Mammary epithelial cell (primary cell): ENCODE measurements at regions of chr12 and their contacts with region 1.

Region 1: DNA sequence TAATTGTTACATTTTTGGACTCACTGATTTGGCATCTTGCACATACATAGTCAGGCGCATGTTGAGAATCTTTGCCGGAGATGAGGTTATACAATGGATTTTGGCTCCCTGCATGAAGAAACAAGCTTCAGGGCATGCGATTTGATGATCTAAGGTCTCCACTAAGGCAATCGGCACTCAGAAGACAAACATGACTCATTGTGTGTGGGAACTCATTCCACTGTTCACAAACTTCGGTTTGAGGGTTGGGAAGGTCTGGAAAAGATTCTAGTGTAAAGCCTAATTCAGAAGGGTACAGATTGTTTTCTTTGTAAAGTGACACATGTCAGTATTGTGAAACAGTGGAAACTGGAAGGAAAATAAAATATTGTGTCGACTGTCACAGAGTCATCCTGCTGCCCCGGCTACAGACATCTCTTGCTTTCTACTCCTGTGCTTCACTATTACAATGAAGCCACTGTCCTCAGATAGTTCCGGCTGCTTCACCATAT is 192.6 kb upstream of the HMGA2 start:
- DNase-seq: peak; percentile 100
- H3K4me3 ChIP-seq: no peak overlapping the region
- H3K27ac ChIP-seq: peak overlapping the region; percentile 100
- H3K4me1 ChIP-seq: peaks cover 54% of the 10 kb centered on the region
- H3K27me3 ChIP-seq: no peaks in the 10 kb centered on the region
- CTCF ChIP-seq: no peak

Region 2: DNA sequence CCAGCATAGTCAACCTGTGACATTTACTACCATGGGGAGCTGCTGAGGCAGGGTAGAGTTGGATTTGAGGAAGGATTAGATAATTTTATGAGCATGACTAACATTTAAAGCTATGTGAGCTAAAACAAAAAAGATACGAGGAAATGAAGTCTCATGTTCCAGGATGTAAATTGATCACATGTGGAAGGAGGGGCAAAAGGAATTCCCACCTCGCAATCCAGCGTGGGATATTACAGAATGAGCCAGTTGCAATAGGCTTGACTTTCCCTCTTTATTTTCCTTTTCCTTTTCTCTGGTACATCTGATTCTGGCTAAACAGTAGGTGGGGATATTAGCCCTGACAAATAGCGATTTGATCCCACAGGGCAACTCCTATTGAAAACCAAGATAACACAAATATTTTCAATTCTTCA is 22.3 kb before region 1 on chr12:
- CTCF ChIA-PET with region 1: no interaction called
- dilution Hi-C with region 1: no loop called
- in situ Hi-C with region 1: no loop called
- intact Hi-C with region 1: loop called (anchors 1 kb)
- DNase-seq: peak; percentile 64
- H3K4me3 ChIP-seq: no peak overlapping the region
- H3K27ac ChIP-seq: peak overlapping the region; percentile 78
- H3K4me1 ChIP-seq: peaks cover 61% of the 10 kb centered on the region
- H3K27me3 ChIP-seq: no peaks in the 10 kb centered on the region
- CTCF ChIP-seq: no peak

Region 3: GRCh38 chr12:65643595-65644386 is 12.1 kb after region 1 on chr12:
- CTCF ChIA-PET with region 1: interaction called, 6 read pairs
- dilution Hi-C with region 1: no loop called
- in situ Hi-C with region 1: no loop called
- intact Hi-C with region 1: loop called (anchors 1 kb)
- DNase-seq: peak; percentile 93
- H3K4me3 ChIP-seq: no peak overlapping the region
- H3K27ac ChIP-seq: peak overlapping the region; percentile 96
- H3K4me1 ChIP-seq: peaks cover 25% of the 10 kb centered on the region
- H3K27me3 ChIP-seq: no peaks in the 10 kb centered on the region
- CTCF ChIP-seq: no peak

Region 4: DNA sequence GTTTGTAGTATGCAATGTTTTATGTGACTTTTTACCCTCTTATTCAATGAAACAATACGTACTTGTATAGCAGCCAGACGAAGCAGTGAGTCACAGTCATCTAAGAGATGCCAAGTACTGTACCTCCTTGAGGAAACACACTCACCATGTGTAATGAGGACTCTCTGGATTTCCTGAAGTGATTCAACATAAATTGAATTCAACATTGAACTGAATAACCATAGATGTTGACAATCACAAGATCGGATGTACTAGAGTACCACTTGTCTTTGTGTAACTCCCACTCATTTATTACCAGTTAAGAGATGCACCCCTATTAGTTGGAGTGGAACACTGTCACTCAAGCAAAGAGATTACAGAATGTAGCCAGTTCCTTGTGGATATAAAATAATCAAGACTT is 17.5 kb after region 1 on chr12:
- CTCF ChIA-PET with region 1: interaction called, 6 read pairs
- dilution Hi-C with region 1: no loop called
- in situ Hi-C with region 1: no loop called
- intact Hi-C with region 1: loop called (anchors 2 kb)
- DNase-seq: peak; percentile 99
- H3K4me3 ChIP-seq: no peak overlapping the region
- H3K27ac ChIP-seq: peak overlapping the region; percentile 93
- H3K4me1 ChIP-seq: peaks cover 31% of the 10 kb centered on the region
- H3K27me3 ChIP-seq: no peaks in the 10 kb centered on the region
- CTCF ChIP-seq: no peak

Region 5: GRCh38 chr12:65656904-65657351 is 25.3 kb after region 1 on chr12:
- CTCF ChIA-PET with region 1: interaction called, 9 read pairs
- dilution Hi-C with region 1: no loop called
- in situ Hi-C with region 1: no loop called
- intact Hi-C with region 1: loop called (anchors 1 kb)
- DNase-seq: peak; percentile 98
- H3K4me3 ChIP-seq: no peak overlapping the region
- H3K27ac ChIP-seq: peak overlapping the region; percentile 97
- H3K4me1 ChIP-seq: peaks cover 31% of the 10 kb centered on the region
- H3K27me3 ChIP-seq: no peaks in the 10 kb centered on the region
- CTCF ChIP-seq: no peak

Region 6: DNA sequence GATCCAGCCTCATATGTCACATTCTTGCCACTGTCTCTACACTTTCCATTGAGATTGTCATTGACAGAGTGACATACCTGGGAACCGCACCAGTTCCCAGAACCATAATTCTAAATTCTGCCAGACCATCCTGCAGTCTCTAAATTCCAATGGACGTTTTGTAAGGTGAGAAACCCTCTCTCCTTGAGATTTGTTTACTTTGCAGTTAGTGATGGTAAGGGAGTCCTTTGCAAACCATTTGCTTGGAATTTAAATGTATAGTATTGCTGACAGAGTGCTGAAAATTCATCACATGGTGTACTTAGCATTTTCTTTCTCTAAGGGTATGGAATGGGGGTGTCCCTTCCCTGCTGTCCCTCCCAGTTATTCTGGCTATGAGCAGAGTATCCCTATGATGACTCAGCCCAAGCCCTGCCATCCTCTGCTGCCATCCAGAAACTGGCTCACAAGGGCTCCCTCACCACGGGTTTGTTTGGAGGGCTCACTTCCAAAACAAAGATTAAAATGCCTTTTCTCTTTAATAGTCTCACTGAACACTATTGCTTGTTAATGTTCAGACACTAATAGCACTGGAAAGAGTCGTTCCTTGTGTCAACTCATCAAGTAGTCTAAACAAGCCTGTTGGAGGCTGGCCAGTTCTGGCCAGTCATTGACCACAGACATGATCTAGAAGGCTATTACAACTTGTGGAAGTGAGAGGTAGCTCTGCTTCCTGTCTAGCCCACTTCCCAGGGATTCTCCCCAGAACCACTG is 63.6 kb after region 1 on chr12:
- CTCF ChIA-PET with region 1: no interaction called
- dilution Hi-C with region 1: loop called (anchors 5 kb)
- in situ Hi-C with region 1: no loop called
- intact Hi-C with region 1: loop called (anchors 2 kb)
- DNase-seq: peak; percentile 98
- H3K4me3 ChIP-seq: no peak overlapping the region
- H3K27ac ChIP-seq: peak overlapping the region; percentile 67
- H3K4me1 ChIP-seq: peaks cover 28% of the 10 kb centered on the region
- H3K27me3 ChIP-seq: no peaks in the 10 kb centered on the region
- CTCF ChIP-seq: no peak

Region 7: GRCh38 chr12:65818454-65819382 is 187.1 kb after region 1 on chr12:
- CTCF ChIA-PET with region 1: no interaction called
- dilution Hi-C with region 1: loop called (anchors 5 kb)
- in situ Hi-C with region 1: no loop called
- intact Hi-C with region 1: no loop called
- DNase-seq: peak; percentile 93
- H3K4me3 ChIP-seq: no peak overlapping the region
- H3K27ac ChIP-seq: peak overlapping the region; percentile 76
- H3K4me1 ChIP-seq: peaks cover 41% of the 10 kb centered on the region
- H3K27me3 ChIP-seq: no peaks in the 10 kb centered on the region
- CTCF ChIP-seq: no peak